ENCODE measurements at regions of chr19 and their contacts with region 1.

Region 1: DNA sequence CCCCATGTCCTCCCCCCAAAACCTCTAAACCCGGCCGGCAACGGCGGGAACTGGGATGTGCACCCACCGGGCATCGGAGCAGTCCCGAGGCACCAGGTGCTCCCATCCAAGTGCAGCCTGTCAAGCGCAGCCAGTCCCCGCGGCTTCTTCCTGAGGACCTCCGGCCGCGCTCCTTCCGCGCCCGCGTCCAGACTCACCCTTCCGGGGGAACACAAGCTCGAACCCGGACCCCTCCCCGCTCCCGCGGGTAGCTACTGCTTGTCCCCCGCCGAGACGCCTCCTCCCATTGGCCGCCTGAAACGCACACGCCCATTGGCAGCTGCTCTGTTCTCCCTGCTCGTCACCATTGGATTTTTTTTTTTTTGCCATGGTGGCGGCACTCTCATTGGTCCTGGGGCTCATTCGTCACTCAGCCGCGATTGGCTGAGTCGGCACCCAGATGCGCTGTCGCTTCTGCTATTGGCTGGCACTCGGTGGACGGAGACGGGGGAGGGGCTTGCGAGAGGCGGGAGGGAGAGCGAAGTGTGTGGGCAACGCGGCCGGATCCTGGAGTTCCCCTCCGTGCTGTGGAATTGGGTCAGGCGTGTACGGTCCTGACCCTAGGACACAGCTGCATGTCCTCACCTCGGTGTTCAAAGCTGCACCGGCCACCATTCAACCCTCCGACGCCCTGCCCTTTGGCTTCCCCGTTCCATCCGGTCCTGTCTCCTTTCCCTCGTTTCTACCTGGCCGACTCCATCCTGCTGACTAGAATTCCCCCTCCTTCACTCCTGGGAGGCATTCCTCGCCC is at the start of gene TYK2:
- DNase-seq: peak; percentile 97 to 98
- H3K4me3 ChIP-seq: peak within 1 kb of the TSS; percentile 96
- H3K4me3 Mint-ChIP-seq: peak within 1 kb of the TSS; percentile 85
- H3K27ac Mint-ChIP-seq: peak within 1 kb of the TSS; percentile 95
- H3K4me1 ChIP-seq: peaks cover 8% of the 10 kb centered on the region
- H3K4me1 Mint-ChIP-seq: peaks cover 8% of the 10 kb centered on the region
- H3K27me3 ChIP-seq: no peaks in the 10 kb centered on the region
- H3K27me3 Mint-ChIP-seq: no peaks in the 10 kb centered on the region
- CTCF ChIP-seq: no peak
- total RNA-seq, gene TYK2: 124 and 134 TPM in 2 replicates

Region 2: DNA sequence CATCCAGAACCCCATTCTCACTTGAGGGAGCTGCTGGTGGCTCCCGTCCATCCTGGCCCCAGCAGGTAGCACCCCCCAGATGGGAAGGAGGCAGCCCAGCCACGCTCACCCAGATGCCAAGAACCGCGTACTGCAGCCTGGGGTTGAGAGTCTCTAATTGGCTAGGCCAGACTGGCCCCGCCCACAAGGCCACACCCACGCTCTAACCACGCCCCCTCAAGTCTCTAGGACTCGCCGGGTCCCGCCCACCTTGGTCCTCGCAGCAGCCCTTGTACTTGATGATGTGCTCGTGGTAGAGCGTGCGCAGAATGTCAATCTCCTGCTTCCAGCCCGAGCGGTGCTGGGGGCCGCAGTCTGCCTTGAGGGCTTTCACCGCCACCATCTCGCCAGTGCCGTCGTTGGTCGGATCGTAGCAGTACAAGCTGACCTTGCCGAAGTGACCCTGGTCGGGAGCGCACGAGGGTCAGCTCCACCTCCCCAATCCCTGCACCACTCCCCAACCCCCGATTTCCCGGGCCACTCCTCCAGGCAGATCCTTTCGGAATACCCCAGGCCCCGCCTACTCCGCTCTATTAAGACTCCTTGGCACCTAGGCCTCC is 26.6 kb before region 1 on chr19:
- CTCF ChIA-PET with region 1: no interaction called
- POLR2A ChIA-PET with region 1: no interaction called
- intact Hi-C with region 1: loop called (anchors 1 kb)
- DNase-seq: peak; percentile 28 to 52
- H3K4me3 ChIP-seq: no peak overlapping the region
- H3K4me3 Mint-ChIP-seq: no peak overlapping the region
- H3K27ac Mint-ChIP-seq: no peak overlapping the region
- H3K4me1 ChIP-seq: no peaks in the 10 kb centered on the region
- H3K4me1 Mint-ChIP-seq: no peaks in the 10 kb centered on the region
- H3K27me3 ChIP-seq: no peaks in the 10 kb centered on the region
- H3K27me3 Mint-ChIP-seq: no peaks in the 10 kb centered on the region
- CTCF ChIP-seq: no peak

Region 3: DNA sequence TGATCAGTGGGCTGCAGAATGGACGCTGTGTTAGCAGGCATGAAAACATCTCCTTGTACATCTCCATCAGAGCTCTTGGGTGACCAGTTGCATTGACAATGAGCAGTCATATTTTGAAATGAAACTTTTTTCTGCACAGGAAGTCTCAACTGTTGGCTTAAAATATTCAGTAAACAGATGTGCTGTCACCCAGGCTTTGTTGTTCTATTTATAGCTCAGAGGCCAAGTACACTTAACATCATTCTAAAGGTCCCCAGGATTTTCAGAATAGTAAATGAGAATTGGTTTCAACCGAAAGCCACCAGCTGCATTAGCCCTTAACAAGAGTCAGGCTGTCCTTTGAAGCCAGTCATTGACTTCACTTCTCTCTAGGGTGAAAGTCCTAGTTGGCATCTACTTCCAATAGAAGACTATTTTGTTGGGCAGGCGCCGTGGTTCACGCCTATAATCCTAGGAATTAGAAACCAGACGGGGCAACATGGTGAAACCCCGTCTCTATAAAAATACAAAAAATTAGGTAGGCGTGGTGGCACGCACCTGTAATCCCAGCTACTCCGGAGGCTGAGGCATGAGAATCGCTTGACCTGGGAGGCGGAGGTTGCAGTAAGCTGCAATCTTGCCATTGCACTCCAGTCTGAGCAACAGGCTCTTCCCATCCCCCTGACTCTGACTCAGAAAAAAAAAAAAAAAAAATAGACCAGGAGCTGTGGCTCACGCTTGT is 31.9 kb after region 1 on chr19:
- CTCF ChIA-PET with region 1: no interaction called
- POLR2A ChIA-PET with region 1: no interaction called
- intact Hi-C with region 1: no loop called
- DNase-seq: no peak
- H3K4me3 ChIP-seq: no peak overlapping the region
- H3K4me3 Mint-ChIP-seq: no peak overlapping the region
- H3K27ac Mint-ChIP-seq: no peak overlapping the region
- H3K4me1 ChIP-seq: no peaks in the 10 kb centered on the region
- H3K4me1 Mint-ChIP-seq: no peaks in the 10 kb centered on the region
- H3K27me3 ChIP-seq: no peaks in the 10 kb centered on the region; the same call in 1 of the 2 replicates
- H3K27me3 Mint-ChIP-seq: peaks cover 6% of the 10 kb centered on the region
- CTCF ChIP-seq: no peak